ENCODE measurements at regions of chr18 and their contacts with region 1.

Region 1: GRCh38 chr18:6980363-6980762 is 137.2 kb downstream of the LAMA1 start:
- DNase-seq: no peak
- ATAC-seq: no peak
- H3K4me3 ChIP-seq: no peak overlapping the region
- H3K4me3 Mint-ChIP-seq: no peak overlapping the region
- H3K27ac ChIP-seq: no peak overlapping the region
- H3K27ac Mint-ChIP-seq: no peak overlapping the region
- H3K4me1 ChIP-seq: no peaks in the 10 kb centered on the region
- H3K4me1 Mint-ChIP-seq: no peaks in the 10 kb centered on the region
- H3K27me3 ChIP-seq: no peaks in the 10 kb centered on the region
- H3K27me3 Mint-ChIP-seq: no peaks in the 10 kb centered on the region
- CTCF ChIP-seq: no peak

Region 2: GRCh38 chr18:6920099-6920899 is 60.1 kb before region 1 on chr18:
- CTCF ChIA-PET with region 1: no interaction called
- POLR2A ChIA-PET with region 1: no interaction called
- intact Hi-C with region 1: loop called in 1 of 2 experiments (anchors 10 kb)
- DNase-seq: no peak
- ATAC-seq: no peak
- H3K4me3 ChIP-seq: no peak overlapping the region
- H3K4me3 Mint-ChIP-seq: no peak overlapping the region
- H3K27ac ChIP-seq: no peak overlapping the region
- H3K27ac Mint-ChIP-seq: no peak overlapping the region
- H3K4me1 ChIP-seq: no peaks in the 10 kb centered on the region
- H3K4me1 Mint-ChIP-seq: no peaks in the 10 kb centered on the region
- H3K27me3 ChIP-seq: no peaks in the 10 kb centered on the region
- H3K27me3 Mint-ChIP-seq: peaks cover 2% of the 10 kb centered on the region
- CTCF ChIP-seq: no peak

Measured in CD8-positive, alpha-beta T cell (primary cell).